ENCODE measurements at regions of chr20 and their contacts with region 1.

Region 1: DNA sequence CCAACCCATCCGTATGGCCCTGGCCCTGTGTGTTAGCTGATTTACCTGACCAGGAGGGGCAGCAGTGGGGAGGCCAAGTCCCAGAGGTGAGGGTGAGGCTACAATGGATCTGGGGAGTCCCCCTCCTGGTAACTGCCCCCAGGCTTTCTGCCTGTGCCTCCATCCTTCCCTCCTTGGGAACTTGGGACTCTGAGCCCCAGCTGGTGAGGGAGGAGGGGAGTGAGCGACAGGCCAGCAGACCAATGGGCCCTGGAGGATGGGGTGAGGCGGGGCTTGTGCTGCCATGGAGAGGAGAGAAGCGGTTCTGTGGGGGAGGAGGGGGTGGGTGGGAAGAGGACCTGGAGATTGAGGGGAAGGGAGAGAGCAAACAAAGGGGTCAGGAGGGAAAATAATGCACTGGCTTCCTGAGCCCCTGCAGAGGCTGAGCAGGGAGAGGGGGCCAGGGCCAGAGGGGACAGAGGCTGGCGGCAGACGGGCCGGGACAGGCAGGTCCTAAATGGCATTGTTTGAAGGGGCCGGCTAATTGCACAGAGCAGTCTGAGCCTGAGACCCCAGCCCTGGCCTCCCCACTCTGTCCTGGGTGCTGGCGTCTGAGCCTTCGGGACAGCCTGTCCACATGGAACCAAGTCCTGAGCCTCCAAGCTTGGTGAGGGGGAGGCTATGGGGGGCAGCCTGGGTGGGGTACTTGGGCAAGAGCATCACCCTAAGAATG is 17.5 kb downstream of the DNMT3B start:
- DNase-seq: no peak
- H3K4me3 ChIP-seq: no peak overlapping the region
- H3K27ac ChIP-seq: no peak overlapping the region
- H3K4me1 ChIP-seq: peaks cover 3 to 44% (median 39%) of the 10 kb centered on the region in 4 experiments
- H3K27me3 ChIP-seq: no peaks in the 10 kb centered on the region

Region 2: GRCh38 chr20:32521780-32522525 is 257.7 kb before region 1 on chr20:
- CTCF ChIA-PET with region 1: interaction called, 26 read pairs
- POLR2A ChIA-PET with region 1: no interaction called
- DNase-seq: peak in 2 of 3 donors; percentile 69 to 77
- H3K4me3 ChIP-seq: no peak overlapping the region
- H3K27ac ChIP-seq: no peak overlapping the region
- H3K4me1 ChIP-seq: peaks cover 0 to 72% (median 69%) of the 10 kb centered on the region in 4 experiments
- H3K27me3 ChIP-seq: no peaks in the 10 kb centered on the region

Region 3: GRCh38 chr20:32664678-32665159 is 114.9 kb before region 1 on chr20:
- CTCF ChIA-PET with region 1: interaction called, 11 read pairs
- POLR2A ChIA-PET with region 1: no interaction called
- DNase-seq: peak in 2 of 3 donors; percentile 37 to 55
- H3K4me3 ChIP-seq: peak overlapping the region in 3 of 7 experiments; percentile 5 to 42 (median 7)
- H3K27ac ChIP-seq: peak overlapping the region in 1 of 2 experiments; percentile 76
- H3K4me1 ChIP-seq: peaks cover 0 to 63% (median 41%) of the 10 kb centered on the region in 4 experiments
- H3K27me3 ChIP-seq: no peaks in the 10 kb centered on the region

Region 4: DNA sequence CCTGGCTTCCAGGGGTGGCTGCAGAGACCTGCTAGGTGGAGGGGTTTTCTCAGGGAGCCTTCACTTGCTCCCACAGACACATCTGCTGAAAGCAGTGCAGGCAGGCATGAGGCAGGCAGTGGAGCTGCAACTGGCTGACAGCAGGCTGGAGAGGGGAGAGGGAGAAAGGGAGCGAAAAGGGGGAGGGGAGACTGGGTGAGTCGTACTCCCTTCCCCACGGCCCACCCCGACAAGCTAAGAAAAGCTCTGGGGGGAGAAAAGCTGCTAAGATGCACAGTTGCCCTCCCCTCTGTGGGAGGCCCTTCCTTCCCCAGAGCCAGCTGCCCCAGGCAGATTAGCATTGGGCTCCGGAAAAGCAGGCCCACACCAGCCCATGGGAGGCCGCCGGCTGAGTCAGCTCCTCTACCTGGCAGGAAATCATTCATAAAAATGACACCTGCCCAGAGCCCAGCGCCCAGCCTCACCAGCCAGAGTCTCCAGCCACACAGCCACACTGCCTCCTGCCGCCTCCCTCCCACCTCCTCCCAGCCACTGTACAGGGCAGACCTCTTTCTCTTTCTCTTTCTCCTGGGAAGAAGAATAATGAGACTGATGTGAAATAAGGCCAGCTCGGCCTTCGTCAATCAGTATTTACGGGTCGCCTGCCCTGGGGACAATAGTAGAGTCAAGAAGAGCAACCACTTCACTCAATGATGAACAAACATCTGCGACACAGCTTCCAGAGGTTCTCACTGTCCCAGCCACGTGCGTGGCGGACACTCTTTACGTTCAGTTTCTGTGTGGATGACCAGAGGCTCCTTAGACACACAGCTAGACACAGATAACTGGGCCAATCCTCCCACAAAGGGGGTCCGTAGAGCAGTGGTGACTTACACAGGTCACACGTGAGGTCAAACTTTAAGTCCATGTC is 98.2 kb before region 1 on chr20:
- CTCF ChIA-PET with region 1: interaction called, 114 read pairs
- POLR2A ChIA-PET with region 1: no interaction called
- DNase-seq: peak; percentile 97 to 100 (median 99)
- H3K4me3 ChIP-seq: peak overlapping the region in 5 of 7 experiments; percentile 34 to 71 (median 55)
- H3K27ac ChIP-seq: peak overlapping the region; percentile 78 to 90
- H3K4me1 ChIP-seq: peaks cover 18 to 93% (median 89%) of the 10 kb centered on the region in 4 experiments
- H3K27me3 ChIP-seq: no peaks in the 10 kb centered on the region

Region 5: GRCh38 chr20:32743237-32744112 is 36.2 kb before region 1 on chr20 and contains the start of gene COMMD7:
- CTCF ChIA-PET with region 1: interaction called, 33 read pairs
- POLR2A ChIA-PET with region 1: interaction called, 6 read pairs
- DNase-seq: peak; percentile 74 to 85 (median 75)
- H3K4me3 ChIP-seq: peak within 1 kb of the TSS; percentile 45 to 96 (median 88)
- H3K27ac ChIP-seq: peak within 1 kb of the TSS; percentile 80 to 93
- H3K4me1 ChIP-seq: peaks cover 10 to 47% (median 32%) of the 10 kb centered on the region in 4 experiments
- H3K27me3 ChIP-seq: no peaks in the 10 kb centered on the region

Region 6: GRCh38 chr20:32767418-32768198 is 12.0 kb before region 1 on chr20:
- CTCF ChIA-PET with region 1: interaction called, 54 read pairs
- POLR2A ChIA-PET with region 1: interaction called, 5 read pairs
- DNase-seq: no peak
- H3K4me3 ChIP-seq: no peak overlapping the region
- H3K27ac ChIP-seq: no peak overlapping the region
- H3K4me1 ChIP-seq: peaks cover 15 to 81% (median 53%) of the 10 kb centered on the region in 4 experiments
- H3K27me3 ChIP-seq: no peaks in the 10 kb centered on the region

Region 7: DNA sequence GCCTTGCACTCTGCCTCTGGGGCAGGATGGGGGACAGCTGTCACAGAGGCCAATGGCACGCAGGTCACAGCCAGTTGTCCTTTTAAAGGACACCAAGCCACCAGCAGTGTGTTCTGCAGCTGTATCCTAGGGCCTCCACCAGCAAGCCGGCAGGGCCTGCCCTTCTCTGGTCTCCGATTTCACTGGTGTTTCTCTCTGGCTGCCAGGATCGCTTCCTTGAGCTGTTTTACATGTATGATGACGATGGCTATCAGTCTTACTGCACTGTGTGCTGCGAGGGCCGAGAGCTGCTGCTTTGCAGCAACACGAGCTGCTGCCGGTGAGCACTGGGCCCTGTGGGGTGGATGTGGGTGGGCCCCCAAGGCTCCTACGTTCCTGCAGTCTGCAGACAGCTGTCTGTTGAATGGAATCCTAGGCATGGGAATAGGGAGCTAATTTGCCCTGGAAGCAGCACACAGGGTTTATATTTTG is 17.4 kb after region 1 on chr20:
- CTCF ChIA-PET with region 1: interaction called, 10 read pairs
- POLR2A ChIA-PET with region 1: no interaction called
- DNase-seq: no peak
- H3K4me3 ChIP-seq: no peak overlapping the region
- H3K27ac ChIP-seq: no peak overlapping the region
- H3K4me1 ChIP-seq: peaks cover 0 to 29% (median 14%) of the 10 kb centered on the region in 4 experiments
- H3K27me3 ChIP-seq: no peaks in the 10 kb centered on the region